Left colon (tissue), 2 donors: ENCODE measurements at regions of chr5 and their contacts with region 1.

Region 1: DNA sequence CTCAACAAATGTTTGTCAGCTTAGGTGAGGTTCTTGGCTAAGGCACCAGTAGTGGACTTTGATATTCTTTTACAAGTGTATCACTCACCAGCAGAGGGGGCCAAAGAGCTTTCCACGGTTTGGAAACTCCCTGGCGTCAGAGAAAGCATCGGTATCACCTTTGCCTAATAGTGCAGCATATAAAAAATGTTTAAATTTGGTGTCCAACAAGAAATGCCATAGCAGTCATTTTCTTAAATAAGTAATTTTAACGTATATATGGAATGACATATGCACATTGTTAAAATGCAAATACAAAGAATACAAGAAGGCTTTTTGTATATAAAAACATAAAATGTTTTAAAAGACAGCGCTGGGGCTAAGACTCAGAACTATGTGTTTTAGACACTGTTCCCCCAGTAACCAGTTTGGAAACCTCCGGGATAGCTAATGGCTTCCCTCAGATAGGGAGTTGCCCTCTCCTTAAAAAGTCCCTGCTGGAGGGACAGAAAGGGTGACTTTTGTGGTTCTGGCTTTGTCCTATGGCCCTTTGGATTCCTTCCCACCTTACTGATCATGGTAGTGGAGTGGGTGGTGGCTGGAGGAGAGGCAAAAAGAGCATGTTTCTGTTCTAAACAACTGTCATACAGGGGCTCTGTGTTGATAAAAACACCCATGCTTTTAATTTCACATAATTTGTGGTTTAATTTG is 124.6 kb downstream of the GPBP1 start:
- DNase-seq: peak; percentile 82 to 93
- ATAC-seq: peak; percentile 89

Region 2: DNA sequence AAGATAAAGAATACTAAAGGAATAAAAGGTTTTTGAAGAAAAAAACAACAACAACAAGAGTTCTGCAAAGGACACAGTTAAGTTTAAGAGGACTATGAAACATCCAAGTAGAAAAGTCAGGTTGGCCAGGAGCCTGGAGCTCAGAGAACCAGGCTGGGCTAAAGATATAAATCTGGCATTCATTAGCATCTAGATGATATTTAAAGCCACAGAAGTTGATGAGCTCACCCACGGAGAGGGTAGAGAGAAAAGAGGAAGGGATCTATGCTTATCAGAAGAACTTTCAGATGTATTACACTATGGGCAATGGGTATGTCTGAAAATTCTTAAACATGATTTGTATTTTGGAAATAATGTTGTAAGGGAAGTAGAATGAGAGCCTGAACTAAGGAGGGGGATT is 356.5 kb before region 1 on chr5:
- intact Hi-C with region 1: no loop called
- DNase-seq: no peak
- ATAC-seq: no peak

Region 3: DNA sequence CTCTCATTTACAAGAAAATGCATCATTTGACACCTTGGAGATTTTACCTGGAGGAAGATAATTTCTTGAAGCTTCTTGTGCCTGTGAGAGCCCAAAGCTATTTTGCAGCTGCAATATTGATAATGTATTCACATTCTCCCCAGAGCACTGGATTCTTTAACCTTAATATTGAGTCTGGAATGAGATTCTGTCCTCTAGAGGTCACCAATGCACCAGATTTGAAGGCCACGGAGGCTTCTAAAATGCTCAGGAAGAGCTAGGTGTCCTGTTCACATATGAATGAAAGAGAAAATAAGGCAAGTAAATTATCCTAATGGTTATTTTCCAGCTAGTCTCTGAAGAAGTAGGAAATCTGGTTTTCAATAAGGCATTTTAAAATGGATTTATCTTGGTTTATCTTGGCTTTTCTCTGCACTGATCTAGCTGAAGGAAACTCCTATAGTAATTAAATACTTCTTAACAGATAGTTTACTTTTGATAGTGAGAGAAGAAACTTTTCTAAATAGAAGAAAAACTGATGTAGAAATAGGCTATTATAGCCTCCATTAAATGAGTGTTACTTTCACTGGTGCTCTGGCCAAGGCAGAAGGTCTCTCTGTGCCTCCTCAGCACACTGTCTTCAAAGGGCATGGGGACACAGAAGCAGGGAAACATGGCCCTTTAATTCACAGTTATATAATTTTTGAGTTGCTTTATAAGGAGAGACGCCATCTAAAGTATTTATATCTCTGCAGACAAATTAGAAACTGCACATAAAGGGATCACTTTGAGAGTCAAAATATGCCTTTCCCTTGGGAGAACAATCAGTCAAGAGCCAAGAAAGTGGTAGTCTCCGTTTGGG is 481.2 kb after region 1 on chr5:
- intact Hi-C with region 1: loop called in 1 of 2 experiments (anchors 10 kb)
- DNase-seq: no peak
- ATAC-seq: peak; percentile 80